ENCODE measurements at regions of chr22 and their contacts with region 1.

Region 1: GRCh38 chr22:25709758-25710157 is 32.2 kb upstream of the MYO18B start:
- DNase-seq: peak; percentile 72
- H3K4me3 Mint-ChIP-seq: no peak overlapping the region
- H3K27ac Mint-ChIP-seq: peak overlapping the region; percentile 86
- H3K4me1 Mint-ChIP-seq: peaks cover 67% of the 10 kb centered on the region
- H3K27me3 Mint-ChIP-seq: no peaks in the 10 kb centered on the region

Region 2: DNA sequence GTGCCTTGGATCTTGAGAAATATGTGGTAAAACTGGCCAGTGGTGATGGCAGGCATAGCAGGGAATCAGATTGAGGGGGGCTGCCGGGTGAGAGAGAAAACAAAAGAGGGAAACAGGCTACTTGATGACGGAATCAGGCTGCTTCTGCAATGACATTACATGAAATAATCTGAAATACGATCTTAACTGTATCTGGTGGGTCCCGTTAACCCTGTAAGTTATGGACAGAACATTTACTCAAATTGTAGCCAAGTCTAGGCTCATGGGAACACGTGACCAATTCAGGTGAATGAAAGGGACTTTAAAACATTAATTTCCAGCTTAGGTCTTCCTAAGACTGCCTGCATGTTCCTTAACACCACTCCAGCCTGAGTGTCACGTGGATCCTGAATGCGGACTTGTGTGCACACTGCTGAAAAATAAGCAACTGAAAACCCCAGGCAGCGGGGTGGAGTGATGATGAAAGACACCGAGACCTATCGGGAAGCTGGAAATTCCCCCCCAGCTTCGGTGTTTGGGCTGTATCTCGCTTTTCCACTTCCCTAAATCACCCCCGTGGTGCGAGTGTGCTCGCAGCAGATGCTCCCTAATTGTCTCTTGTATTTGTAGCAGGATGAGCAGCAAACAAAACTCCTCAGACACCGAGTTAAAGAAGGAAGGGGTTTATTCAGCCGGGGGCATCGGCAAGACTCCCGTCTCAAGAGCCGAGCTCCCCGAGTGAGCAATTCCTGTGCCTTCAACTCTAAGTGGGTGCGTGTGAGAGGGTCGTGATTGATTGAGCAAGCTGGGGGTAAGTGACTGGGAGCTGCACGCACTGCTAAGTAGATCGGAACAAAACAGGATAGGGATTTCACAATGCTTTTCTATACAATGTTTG is 290.3 kb before region 1 on chr22:
- CTCF ChIA-PET with region 1: no interaction called
- DNase-seq: no peak
- H3K4me3 Mint-ChIP-seq: peak overlapping the region; percentile 5
- H3K27ac Mint-ChIP-seq: peak overlapping the region; percentile 22
- H3K4me1 Mint-ChIP-seq: peaks cover 33% of the 10 kb centered on the region
- H3K27me3 Mint-ChIP-seq: peaks cover 88% of the 10 kb centered on the region

Region 3: GRCh38 chr22:25726241-25726640 is 16.5 kb after region 1 on chr22:
- CTCF ChIA-PET with region 1: interaction called, 10 read pairs
- DNase-seq: no peak
- H3K4me3 Mint-ChIP-seq: no peak overlapping the region
- H3K27ac Mint-ChIP-seq: peak overlapping the region; percentile 73
- H3K4me1 Mint-ChIP-seq: peaks cover 34% of the 10 kb centered on the region
- H3K27me3 Mint-ChIP-seq: no peaks in the 10 kb centered on the region

Measured in activated naive CD4-positive, alpha-beta T cell treated with anti-CD3 and anti-CD28 coated beads, Interleukin-2, amount 10 ng/mL, durations not matched to agents 7 days and 5 days (primary cell).